MCF 10A (cell line): ENCODE measurements at regions of chr4 and their contacts with region 1.

Region 1: DNA sequence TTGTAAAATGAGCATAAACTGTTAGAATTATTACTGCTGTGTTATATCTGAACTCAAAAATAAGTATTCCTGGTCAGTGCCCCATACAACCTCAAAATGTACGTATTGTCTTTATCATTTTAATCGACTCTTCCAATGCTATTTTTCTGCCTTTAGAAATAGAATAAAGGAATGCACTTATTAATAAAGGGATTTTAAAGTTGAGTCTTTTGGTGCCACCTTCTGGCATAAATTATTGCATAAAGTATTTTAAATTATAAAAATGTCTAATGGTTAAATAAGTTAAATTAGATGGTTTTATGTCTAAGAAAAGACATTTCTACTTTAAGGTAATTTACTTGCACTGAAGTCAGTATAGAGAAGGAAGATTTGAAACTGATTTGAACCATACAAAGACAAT is 424.0 kb upstream of the NDST4 start:
- DNase-seq: peak; percentile 26
- H3K4me3 Mint-ChIP-seq: no peak overlapping the region
- H3K27ac Mint-ChIP-seq: no peak overlapping the region
- H3K4me1 Mint-ChIP-seq: no peaks in the 10 kb centered on the region
- H3K27me3 Mint-ChIP-seq: peaks cover 19% of the 10 kb centered on the region
- CTCF ChIP-seq: peak; percentile 44

Region 2: DNA sequence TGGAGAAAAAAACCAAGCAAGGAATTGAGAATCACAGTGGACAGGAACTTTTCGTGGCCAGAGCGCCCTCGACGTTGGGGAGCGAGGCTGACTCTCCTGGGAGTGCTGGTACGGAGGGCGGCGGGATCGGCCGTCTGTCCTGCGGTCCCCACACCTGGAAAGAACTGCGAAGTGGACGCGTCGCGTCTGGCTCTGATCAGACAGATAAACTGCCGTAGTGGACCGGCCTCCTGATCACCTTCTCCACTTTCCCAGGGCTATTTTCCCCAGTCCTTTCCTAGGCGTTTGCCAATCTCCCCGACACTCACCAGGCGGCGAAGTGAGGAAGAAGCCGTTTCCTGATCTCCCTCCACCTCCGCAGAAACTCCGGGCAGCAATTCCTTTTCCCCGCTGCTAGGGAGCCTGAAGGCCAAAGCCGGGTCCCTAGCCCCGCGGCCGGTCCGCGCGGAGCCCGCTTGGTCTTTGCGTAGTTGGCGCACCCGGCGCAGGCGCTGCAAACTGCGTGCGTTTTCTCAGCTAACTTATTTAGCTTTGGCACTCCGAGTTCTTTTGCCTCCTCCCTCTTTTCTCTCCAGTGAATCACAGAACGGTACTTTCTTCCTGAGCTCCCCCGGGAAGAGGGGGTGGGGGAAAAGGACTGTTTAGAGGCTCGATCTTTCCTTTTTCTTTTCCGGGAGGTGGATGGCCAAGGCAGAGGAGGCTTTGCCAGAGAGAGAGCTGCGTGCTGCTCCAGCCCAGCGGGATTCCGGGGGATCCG is 1558.1 kb before region 1 on chr4 and contains the start of gene ARSJ:
- CTCF ChIA-PET with region 1: no interaction called
- POLR2A ChIA-PET with region 1: no interaction called
- intact Hi-C with region 1: no loop called
- DNase-seq: peak; percentile 87
- H3K4me3 Mint-ChIP-seq: peak within 1 kb of the TSS; percentile 94
- H3K27ac Mint-ChIP-seq: peak within 1 kb of the TSS; percentile 95
- H3K4me1 Mint-ChIP-seq: peaks cover 19% of the 10 kb centered on the region
- H3K27me3 Mint-ChIP-seq: no peaks in the 10 kb centered on the region
- CTCF ChIP-seq: peak; percentile 34
- total RNA-seq, gene ARSJ: 36.2 and 50.7 TPM in 2 replicates

Region 3: DNA sequence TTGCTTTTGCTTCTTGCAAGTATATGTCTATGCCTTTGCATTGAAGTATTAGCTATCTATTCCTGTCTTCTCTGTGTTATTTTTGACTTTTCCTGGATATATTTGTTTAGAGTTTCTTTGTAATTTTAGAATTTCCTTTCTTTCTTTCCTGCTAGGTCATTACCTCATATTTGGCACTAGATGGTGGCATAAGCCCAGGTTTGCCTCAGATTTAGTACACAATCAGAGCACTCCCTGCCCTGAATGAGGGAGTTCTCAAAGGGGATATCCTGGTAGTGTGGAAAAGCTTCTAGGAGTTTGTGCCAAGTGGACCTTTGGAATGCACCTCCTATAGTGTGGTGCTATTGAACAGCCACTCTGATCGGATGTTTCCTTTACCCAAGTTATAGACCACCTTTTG is 757.2 kb before region 1 on chr4:
- CTCF ChIA-PET with region 1: interaction called, 11 read pairs
- POLR2A ChIA-PET with region 1: no interaction called
- intact Hi-C with region 1: loop called (anchors 1 kb)
- DNase-seq: peak; percentile 64
- H3K4me3 Mint-ChIP-seq: no peak overlapping the region
- H3K27ac Mint-ChIP-seq: no peak overlapping the region
- H3K4me1 Mint-ChIP-seq: no peaks in the 10 kb centered on the region
- H3K27me3 Mint-ChIP-seq: peaks cover 12% of the 10 kb centered on the region
- CTCF ChIP-seq: peak; percentile 54

Region 4: DNA sequence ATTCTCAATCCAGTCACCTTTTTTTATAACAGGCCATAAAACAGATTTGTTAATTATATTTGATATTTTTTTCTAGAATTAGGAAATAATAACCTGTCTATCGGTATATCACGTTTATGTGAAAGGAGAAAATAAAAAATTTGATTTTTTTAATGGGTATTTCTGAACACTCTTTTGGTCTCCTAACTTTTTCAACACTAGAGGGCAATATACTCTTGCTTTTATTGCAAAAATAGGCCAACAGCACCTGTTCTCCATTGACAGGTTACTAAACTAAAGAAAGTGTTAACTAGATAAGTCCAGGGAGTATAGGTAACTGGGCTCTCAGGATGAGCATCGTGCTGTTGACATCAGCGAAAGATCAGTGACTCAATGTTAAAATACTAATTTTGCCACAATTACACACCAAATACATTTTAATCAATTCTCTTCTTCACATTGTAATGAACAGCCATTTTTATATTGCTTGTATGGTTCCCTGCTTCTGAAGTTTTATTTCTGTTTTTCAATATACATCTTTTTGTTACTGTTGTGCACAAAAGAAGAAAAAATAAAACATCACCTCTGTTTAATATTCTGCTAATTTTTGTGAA is 446.8 kb before region 1 on chr4:
- CTCF ChIA-PET with region 1: interaction called, 6 read pairs
- POLR2A ChIA-PET with region 1: no interaction called
- intact Hi-C with region 1: loop called (anchors 1 kb)
- DNase-seq: peak; percentile 53
- H3K4me3 Mint-ChIP-seq: no peak overlapping the region
- H3K27ac Mint-ChIP-seq: no peak overlapping the region
- H3K4me1 Mint-ChIP-seq: no peaks in the 10 kb centered on the region
- H3K27me3 Mint-ChIP-seq: peaks cover 26% of the 10 kb centered on the region
- CTCF ChIP-seq: peak; percentile 53

Region 5: GRCh38 chr4:115515772-115516171 is 21.6 kb before region 1 on chr4:
- CTCF ChIA-PET with region 1: no interaction called
- POLR2A ChIA-PET with region 1: no interaction called
- intact Hi-C with region 1: no loop called
- DNase-seq: no peak
- H3K4me3 Mint-ChIP-seq: no peak overlapping the region
- H3K27ac Mint-ChIP-seq: no peak overlapping the region
- H3K4me1 Mint-ChIP-seq: no peaks in the 10 kb centered on the region
- H3K27me3 Mint-ChIP-seq: no peaks in the 10 kb centered on the region
- CTCF ChIP-seq: no peak

Region 6: DNA sequence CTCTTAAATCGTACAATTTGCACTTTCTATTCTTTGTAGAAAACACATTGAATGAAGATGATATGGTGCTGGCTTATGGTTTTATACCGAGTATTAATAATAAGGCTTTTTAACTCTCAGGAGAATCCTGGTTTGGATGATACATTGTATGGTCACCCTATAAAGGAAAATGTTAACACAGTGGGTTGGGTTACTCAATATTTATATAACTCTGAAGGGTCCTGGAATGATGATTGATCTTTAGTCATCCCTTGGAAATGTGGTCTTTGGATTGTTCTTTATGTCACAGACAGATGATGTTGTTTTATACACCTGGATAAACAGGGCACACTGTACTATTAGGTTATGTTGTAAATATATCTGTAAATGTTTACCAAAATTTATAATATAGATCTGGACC is 72.2 kb after region 1 on chr4:
- CTCF ChIA-PET with region 1: no interaction called
- POLR2A ChIA-PET with region 1: no interaction called
- intact Hi-C with region 1: no loop called
- DNase-seq: no peak
- H3K4me3 Mint-ChIP-seq: no peak overlapping the region
- H3K27ac Mint-ChIP-seq: no peak overlapping the region
- H3K4me1 Mint-ChIP-seq: no peaks in the 10 kb centered on the region
- H3K27me3 Mint-ChIP-seq: peaks cover 31% of the 10 kb centered on the region
- CTCF ChIP-seq: no peak

Region 7: GRCh38 chr4:115796160-115796559 is 258.8 kb after region 1 on chr4:
- CTCF ChIA-PET with region 1: no interaction called
- POLR2A ChIA-PET with region 1: no interaction called
- intact Hi-C with region 1: no loop called
- DNase-seq: no peak
- H3K4me3 Mint-ChIP-seq: no peak overlapping the region
- H3K27ac Mint-ChIP-seq: no peak overlapping the region
- H3K4me1 Mint-ChIP-seq: no peaks in the 10 kb centered on the region
- H3K27me3 Mint-ChIP-seq: peaks cover 12% of the 10 kb centered on the region
- CTCF ChIP-seq: no peak